ENCODE measurements at regions of chr11 and their contacts with region 1.

Region 1: GRCh38 chr11:3854977-3855807 is at the start of gene STIM1:
- DNase-seq: peak; percentile 99
- ATAC-seq: peak; percentile 76
- H3K4me3 Mint-ChIP-seq: peak within 1 kb of the TSS; percentile 88
- H3K27ac Mint-ChIP-seq: peak within 1 kb of the TSS; percentile 99
- H3K4me1 Mint-ChIP-seq: peaks cover 56% of the 10 kb centered on the region
- H3K27me3 Mint-ChIP-seq: no peaks in the 10 kb centered on the region
- total RNA-seq, gene STIM1: 60.0 to 62.6 TPM

Region 2: GRCh38 chr11:3709977-3710376 is 145.2 kb before region 1 on chr11:
- CTCF ChIA-PET with region 1: no interaction called
- POLR2A ChIA-PET with region 1: no interaction called
- intact Hi-C with region 1: no loop called
- DNase-seq: no peak
- ATAC-seq: no peak
- H3K4me3 Mint-ChIP-seq: no peak overlapping the region
- H3K27ac Mint-ChIP-seq: no peak overlapping the region
- H3K4me1 Mint-ChIP-seq: peaks cover 4% of the 10 kb centered on the region
- H3K27me3 Mint-ChIP-seq: no peaks in the 10 kb centered on the region

Region 3: DNA sequence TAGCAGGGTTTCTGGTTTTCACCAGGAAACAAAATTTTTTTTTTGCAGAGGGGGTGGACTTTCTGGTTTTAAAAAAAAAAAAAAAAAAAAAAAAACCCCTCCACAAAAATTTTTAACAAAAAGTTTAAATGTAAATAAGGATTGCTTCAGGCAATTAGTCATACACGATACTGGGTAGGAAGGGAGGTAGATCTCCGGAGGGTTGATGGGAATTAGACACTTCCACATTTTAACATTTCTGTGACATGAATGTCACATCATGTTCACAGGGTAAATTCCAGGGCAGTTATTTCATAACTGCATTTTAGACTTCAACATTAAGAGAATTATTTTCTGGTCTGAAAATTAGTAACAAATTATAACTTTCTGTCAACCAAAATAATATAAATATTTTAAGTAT is 73.8 kb before region 1 on chr11:
- CTCF ChIA-PET with region 1: no interaction called
- POLR2A ChIA-PET with region 1: no interaction called
- intact Hi-C with region 1: no loop called
- DNase-seq: no peak
- ATAC-seq: no peak
- H3K4me3 Mint-ChIP-seq: no peak overlapping the region
- H3K27ac Mint-ChIP-seq: peak overlapping the region; percentile 72
- H3K4me1 Mint-ChIP-seq: peaks cover 47% of the 10 kb centered on the region
- H3K27me3 Mint-ChIP-seq: no peaks in the 10 kb centered on the region

Region 4: DNA sequence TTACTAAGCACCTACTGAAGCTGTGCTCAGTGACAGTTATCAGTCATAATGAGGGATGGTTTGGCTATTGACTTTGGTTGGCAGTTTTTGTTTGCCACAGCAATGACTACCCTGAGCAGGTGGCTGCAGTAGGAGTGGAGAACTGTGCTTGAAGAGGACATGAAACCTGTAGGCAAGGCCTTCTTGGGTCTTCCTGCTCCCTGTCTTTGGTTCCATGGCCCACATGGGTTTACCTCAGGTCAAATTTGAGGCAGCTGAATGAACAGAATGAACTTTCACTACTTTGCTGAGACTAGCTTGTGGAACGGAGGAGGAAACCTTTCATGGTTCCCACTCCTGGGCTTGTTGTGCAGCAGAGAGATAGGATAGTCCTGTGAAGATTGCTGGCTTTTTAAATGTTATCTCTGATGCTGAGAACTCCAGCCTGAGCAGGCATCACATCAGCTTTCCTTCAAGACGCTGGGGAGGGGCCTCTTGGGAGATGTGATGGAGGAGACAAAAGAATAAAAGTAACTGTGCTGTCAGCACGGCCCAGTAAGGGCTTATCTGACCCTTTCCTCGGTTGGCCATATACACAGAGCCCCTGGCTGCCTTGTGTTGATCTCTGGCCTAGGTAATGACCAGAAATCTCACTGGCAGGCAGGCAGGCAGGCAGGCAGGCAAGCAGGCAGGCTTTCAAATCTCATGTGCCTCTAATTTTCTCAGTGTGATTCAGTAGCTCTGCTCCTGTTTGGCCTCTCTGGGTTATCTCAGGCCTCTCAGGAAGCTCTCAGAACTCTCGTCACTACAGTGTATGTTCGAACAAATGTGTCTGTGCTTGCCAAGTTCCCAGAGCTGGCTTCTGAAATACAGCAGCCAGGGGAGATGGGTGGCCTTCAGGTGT is 12.3 kb after region 1 on chr11:
- CTCF ChIA-PET with region 1: interaction called, 18 read pairs
- POLR2A ChIA-PET with region 1: interaction called, 9 read pairs
- intact Hi-C with region 1: loop called in 1 of 2 experiments (anchors 2 kb)
- DNase-seq: peak; percentile 61
- ATAC-seq: peak; percentile 70
- H3K4me3 Mint-ChIP-seq: peak overlapping the region; percentile 25
- H3K27ac Mint-ChIP-seq: peak overlapping the region; percentile 92
- H3K4me1 Mint-ChIP-seq: peaks cover 90% of the 10 kb centered on the region
- H3K27me3 Mint-ChIP-seq: no peaks in the 10 kb centered on the region

Region 5: DNA sequence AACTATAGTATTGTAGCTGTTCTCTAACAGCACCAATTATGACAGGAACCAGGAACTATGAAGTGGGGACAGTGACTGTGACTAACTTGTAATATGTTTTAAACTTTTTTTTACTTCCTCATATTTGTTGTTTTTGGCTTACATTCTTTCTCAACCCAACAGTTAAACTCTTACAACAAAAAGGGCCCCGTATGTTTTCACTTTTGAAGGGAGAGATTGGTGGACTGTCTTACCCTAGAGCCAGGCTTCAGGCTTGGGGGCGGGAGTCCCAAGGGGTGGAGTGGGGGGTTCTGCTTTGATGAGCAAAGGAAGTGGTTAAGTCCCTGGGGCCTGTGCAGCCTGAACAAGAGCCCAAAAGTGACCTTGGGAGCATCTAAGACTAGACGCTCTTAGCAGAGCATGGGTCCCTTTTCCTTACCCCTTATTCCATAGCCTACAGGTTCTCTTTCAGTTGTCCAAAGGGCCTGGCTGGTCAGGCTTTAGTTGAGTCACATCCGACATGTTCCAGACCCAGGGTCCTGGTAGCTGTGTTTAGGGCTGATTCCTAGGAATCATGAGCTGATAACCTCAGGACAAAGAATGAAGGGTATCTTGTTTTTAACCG is 39.0 kb after region 1 on chr11:
- CTCF ChIA-PET with region 1: interaction called, 10 read pairs
- POLR2A ChIA-PET with region 1: interaction called, 3 read pairs
- intact Hi-C with region 1: no loop called
- DNase-seq: peak; percentile 23
- ATAC-seq: peak; percentile 63
- H3K4me3 Mint-ChIP-seq: no peak overlapping the region
- H3K27ac Mint-ChIP-seq: peak overlapping the region; percentile 56
- H3K4me1 Mint-ChIP-seq: peaks cover 39% of the 10 kb centered on the region
- H3K27me3 Mint-ChIP-seq: no peaks in the 10 kb centered on the region

Region 6: GRCh38 chr11:3934658-3935057 is 79.5 kb after region 1 on chr11:
- CTCF ChIA-PET with region 1: interaction called, 10 read pairs
- POLR2A ChIA-PET with region 1: interaction called, 3 read pairs
- intact Hi-C with region 1: no loop called
- DNase-seq: no peak
- ATAC-seq: no peak
- H3K4me3 Mint-ChIP-seq: no peak overlapping the region
- H3K27ac Mint-ChIP-seq: peak overlapping the region; percentile 3
- H3K4me1 Mint-ChIP-seq: peaks cover 54% of the 10 kb centered on the region
- H3K27me3 Mint-ChIP-seq: no peaks in the 10 kb centered on the region

Region 7: DNA sequence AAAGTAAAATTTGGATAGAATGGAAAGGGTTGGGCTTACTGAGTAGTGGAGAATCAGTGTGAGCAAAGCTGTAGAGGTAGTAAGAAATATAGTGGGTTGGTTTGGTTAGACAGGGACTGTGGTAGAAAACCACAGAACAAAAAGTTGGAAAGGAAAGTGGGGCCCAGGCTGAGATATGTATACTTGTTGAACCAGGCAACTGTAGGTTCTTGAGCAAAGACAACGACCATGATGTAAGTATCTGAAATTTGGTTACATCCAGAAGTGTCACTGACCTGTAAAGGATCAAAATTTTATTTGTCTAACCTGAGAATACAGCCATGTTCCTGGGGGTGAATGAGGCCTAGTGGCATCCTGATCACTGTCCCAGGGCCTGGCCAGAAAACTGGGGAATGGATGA is 114.4 kb after region 1 on chr11:
- CTCF ChIA-PET with region 1: interaction called, 10 read pairs
- POLR2A ChIA-PET with region 1: interaction called, 9 read pairs
- intact Hi-C with region 1: loop called in 1 of 2 experiments (anchors 1 kb)
- DNase-seq: peak; percentile 59
- ATAC-seq: peak; percentile 77
- H3K4me3 Mint-ChIP-seq: peak overlapping the region; percentile 26
- H3K27ac Mint-ChIP-seq: peak overlapping the region; percentile 92
- H3K4me1 Mint-ChIP-seq: peaks cover 77% of the 10 kb centered on the region
- H3K27me3 Mint-ChIP-seq: no peaks in the 10 kb centered on the region

Region 8: DNA sequence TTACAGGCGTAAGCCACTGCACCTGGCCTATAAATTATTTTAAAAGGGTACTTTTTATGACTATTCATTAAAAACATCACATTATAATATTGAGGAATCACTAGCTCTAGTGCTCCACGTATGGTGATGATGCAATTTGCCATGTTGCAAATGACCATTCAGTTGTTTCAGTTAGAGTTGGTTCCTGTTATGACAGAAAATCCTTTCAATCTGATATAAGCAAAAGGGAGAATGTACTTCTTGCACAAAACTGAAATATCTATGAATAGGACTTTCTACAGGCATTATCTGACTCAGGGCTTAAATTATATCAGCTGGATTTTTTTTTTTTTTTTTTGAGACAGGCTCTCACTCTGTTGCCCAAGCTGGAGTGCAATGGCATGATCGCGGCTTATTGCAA is 193.8 kb after region 1 on chr11:
- CTCF ChIA-PET with region 1: interaction called, 10 read pairs
- POLR2A ChIA-PET with region 1: no interaction called
- intact Hi-C with region 1: no loop called
- DNase-seq: no peak
- ATAC-seq: no peak
- H3K4me3 Mint-ChIP-seq: no peak overlapping the region
- H3K27ac Mint-ChIP-seq: no peak overlapping the region
- H3K4me1 Mint-ChIP-seq: peaks cover 20% of the 10 kb centered on the region
- H3K27me3 Mint-ChIP-seq: no peaks in the 10 kb centered on the region

Region 9: GRCh38 chr11:4094348-4095291 is 239.4 kb after region 1 on chr11 and contains the start of gene RRM1:
- CTCF ChIA-PET with region 1: interaction called, 6 read pairs
- POLR2A ChIA-PET with region 1: interaction called, 4 read pairs
- intact Hi-C with region 1: loop called (anchors 1 kb)
- DNase-seq: peak; percentile 96
- ATAC-seq: peak; percentile 96
- H3K4me3 Mint-ChIP-seq: peak within 1 kb of the TSS; percentile 98
- H3K27ac Mint-ChIP-seq: peak within 1 kb of the TSS; percentile 97
- H3K4me1 Mint-ChIP-seq: peaks cover 71% of the 10 kb centered on the region
- H3K27me3 Mint-ChIP-seq: no peaks in the 10 kb centered on the region
- total RNA-seq, gene RRM1: 220 to 259 TPM

Region 10: DNA sequence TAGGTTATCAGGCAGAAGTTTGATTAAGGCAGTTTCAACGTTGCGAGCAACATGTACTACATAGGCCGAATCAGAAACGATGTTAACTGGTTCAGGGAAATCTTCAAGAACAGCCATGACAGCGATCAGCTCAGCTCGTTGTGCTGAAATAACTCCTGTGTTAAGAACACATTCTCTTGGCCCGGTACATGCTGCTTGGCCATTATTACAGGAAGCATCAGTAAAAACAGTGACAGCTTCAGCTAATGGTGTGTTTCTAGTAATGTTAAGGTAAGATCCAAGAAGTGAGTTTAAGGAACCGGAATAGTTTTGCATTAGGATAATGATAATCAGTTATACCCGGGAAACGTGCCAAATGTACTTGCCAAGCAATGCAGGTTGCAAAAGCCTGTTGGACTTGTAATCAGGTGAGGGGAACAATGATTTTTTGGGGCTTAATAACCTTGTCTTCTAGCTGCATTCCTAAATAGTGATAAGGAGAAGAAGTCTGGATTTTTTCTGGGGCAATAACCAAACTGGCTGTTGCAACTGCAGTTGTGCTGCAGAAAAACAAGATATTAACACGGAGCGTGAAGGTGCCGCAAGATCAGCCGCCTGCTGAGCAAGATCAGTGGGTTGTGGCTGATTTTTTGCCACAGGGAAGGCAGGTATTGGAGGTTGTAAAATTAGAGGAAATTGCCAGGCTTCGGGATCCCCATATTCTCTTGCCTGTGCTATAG is 641.5 kb after region 1 on chr11:
- CTCF ChIA-PET with region 1: no interaction called
- POLR2A ChIA-PET with region 1: no interaction called
- intact Hi-C with region 1: no loop called
- DNase-seq: no peak
- ATAC-seq: no peak
- H3K4me3 Mint-ChIP-seq: no peak overlapping the region
- H3K27ac Mint-ChIP-seq: no peak overlapping the region
- H3K4me1 Mint-ChIP-seq: peaks cover 10% of the 10 kb centered on the region
- H3K27me3 Mint-ChIP-seq: peaks cover 11% of the 10 kb centered on the region

Region 11: DNA sequence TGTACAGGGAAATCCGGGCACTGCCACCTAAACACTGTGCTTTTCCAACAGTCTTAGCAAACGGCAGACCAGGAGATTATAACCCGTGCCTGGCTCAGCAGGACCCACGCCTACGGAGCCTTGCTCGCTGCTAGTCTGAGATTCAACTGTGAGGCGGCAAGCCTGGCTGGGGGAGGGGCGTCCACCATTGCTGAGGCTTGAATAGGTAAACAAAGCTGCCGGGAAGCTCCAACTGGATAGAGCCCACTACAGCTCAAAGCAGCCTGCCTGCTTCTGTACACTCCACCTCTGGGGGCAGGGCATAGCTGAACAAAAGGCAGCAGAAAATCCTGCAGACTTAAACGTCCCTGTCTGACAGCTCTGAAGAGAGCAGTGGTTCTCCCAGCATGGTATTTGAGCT is 676.5 kb after region 1 on chr11:
- CTCF ChIA-PET with region 1: no interaction called
- POLR2A ChIA-PET with region 1: no interaction called
- intact Hi-C with region 1: no loop called
- DNase-seq: no peak
- ATAC-seq: no peak
- H3K4me3 Mint-ChIP-seq: no peak overlapping the region
- H3K27ac Mint-ChIP-seq: no peak overlapping the region
- H3K4me1 Mint-ChIP-seq: no peaks in the 10 kb centered on the region
- H3K27me3 Mint-ChIP-seq: peaks cover 17% of the 10 kb centered on the region